ENCODE measurements at regions of chr22 and their contacts with region 1.

Region 1: GRCh38 chr22:44608597-44609399 is 93.2 kb upstream of the PRR5 start:
- DNase-seq: no peak
- H3K4me3 ChIP-seq: no peak overlapping the region
- CTCF ChIP-seq: no peak

Region 2: DNA sequence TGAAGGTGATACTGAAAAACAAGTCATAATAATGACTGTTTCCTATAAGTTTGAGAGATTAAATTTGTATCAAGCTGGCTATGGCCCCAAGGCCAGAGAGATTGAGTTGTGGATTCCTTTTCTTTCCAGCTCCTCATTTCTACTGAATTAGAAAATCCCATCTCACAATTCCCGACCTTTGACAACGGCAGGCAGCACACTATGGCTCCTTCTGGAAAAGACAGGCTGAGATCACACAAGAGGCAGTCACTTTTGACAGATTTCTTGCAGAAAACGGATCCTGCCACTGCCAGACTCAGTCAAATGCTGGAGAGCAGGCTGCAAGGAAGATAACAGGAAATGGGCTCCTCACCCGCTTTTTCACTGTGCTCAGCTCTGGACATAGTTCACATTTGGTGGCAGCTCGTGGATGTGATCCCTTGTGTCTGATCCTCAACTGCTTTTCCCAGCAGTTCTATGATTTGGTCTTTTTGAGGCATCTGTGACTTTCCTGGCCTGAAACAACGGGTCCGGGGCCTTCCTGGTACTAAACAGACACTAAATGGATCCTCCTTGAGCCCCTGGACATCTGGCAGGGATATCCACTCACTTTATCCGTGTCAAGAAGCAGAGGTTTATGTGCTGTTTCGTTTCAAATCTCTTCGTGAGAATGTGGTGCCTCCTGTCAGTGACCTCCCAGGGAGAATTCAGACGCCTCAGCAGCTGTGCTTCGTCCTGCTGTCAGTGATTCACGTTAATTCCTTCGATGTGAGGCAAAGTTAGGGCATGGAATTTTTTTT is 84.6 kb before region 1 on chr22:
- in situ Hi-C with region 1: no loop called
- DNase-seq: peak; percentile 20
- H3K4me3 ChIP-seq: no peak overlapping the region
- CTCF ChIP-seq: no peak

Region 3: GRCh38 chr22:44669561-44669976 is 60.8 kb after region 1 on chr22:
- in situ Hi-C with region 1: loop called (anchors 5 kb)
- DNase-seq: no peak
- H3K4me3 ChIP-seq: peak overlapping the region; percentile 41
- CTCF ChIP-seq: peak; percentile 46

Region 4: GRCh38 chr22:44691796-44692661 is 83.2 kb after region 1 on chr22:
- in situ Hi-C with region 1: no loop called
- DNase-seq: no peak
- H3K4me3 ChIP-seq: no peak overlapping the region
- CTCF ChIP-seq: no peak